AG04450 (cell line): ENCODE measurements at regions of chr3 and their contacts with region 1.

Region 1: DNA sequence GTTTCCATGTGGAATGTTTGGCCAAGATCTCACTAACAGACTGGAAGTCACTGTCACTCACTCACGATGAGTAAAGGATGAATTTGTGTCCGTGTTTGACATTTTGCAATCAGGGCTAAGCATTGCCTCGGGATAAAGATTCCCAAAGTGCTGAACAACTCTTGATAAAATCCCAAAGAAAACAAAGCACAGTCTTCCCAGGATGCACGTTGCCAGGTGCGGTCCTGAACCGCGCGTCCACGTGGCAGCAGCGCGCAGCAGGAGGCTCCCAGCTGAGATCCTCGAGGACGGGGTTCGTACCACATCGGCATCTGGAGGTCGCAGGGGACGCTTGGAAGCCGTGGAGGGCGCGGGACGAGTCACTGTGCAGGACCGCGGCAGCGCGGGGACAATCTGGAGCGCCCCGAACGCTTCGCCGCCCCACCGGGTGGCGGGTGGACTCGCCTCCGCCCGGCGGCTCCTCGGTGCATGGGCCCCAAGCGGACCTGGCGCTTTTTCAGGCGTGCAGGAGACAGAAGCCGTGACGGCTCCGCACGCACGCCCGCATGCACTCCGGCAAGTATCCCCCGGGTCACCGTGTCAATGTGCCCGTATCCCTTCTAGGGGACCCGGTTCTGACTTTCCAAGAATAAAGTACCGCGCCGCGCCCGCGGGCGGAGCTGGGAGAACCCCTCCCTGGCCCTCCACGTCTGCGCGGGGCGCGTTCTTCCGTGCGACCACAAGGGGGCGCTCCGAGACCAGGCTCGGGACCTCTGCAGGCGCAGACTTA is 17.7 kb downstream of the CPN2 start:
- DNase-seq: no peak
- H3K4me3 ChIP-seq: peak overlapping the region; percentile 67
- H3K27ac ChIP-seq: no peak overlapping the region
- H3K27me3 ChIP-seq: no peaks in the 10 kb centered on the region
- CTCF ChIP-seq: peak; percentile 92

Region 2: DNA sequence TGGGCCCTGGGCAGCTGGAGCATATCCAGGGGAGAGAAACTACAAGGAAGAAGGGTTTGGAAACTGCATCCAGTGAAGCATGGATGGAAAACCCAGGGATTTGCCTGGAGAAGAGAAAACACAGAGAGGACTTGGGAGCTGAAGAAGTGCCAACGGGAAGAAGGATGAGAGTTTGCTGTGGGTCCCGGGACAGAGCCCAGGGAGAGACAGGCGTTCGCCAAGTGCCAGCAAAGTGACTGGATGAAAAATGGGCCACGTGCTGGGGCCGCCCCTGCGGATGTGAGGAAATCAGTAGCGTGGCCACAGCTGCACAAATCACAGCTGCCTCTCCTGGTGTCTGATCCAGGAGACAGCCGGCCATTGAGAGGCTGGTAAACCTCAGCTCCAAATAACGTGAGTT is 127.1 kb before region 1 on chr3:
- CTCF ChIA-PET with region 1: no interaction called
- POLR2A ChIA-PET with region 1: no interaction called
- DNase-seq: no peak
- H3K4me3 ChIP-seq: no peak overlapping the region
- H3K27ac ChIP-seq: no peak overlapping the region
- H3K27me3 ChIP-seq: peaks cover 40% of the 10 kb centered on the region
- CTCF ChIP-seq: no peak

Region 3: GRCh38 chr3:194395778-194396547 is 62.6 kb after region 1 on chr3:
- CTCF ChIA-PET with region 1: interaction called, 11 read pairs
- POLR2A ChIA-PET with region 1: no interaction called
- DNase-seq: no peak
- H3K4me3 ChIP-seq: no peak overlapping the region
- H3K27ac ChIP-seq: peak overlapping the region; percentile 21
- H3K27me3 ChIP-seq: peaks cover 23% of the 10 kb centered on the region
- CTCF ChIP-seq: no peak

Region 4: DNA sequence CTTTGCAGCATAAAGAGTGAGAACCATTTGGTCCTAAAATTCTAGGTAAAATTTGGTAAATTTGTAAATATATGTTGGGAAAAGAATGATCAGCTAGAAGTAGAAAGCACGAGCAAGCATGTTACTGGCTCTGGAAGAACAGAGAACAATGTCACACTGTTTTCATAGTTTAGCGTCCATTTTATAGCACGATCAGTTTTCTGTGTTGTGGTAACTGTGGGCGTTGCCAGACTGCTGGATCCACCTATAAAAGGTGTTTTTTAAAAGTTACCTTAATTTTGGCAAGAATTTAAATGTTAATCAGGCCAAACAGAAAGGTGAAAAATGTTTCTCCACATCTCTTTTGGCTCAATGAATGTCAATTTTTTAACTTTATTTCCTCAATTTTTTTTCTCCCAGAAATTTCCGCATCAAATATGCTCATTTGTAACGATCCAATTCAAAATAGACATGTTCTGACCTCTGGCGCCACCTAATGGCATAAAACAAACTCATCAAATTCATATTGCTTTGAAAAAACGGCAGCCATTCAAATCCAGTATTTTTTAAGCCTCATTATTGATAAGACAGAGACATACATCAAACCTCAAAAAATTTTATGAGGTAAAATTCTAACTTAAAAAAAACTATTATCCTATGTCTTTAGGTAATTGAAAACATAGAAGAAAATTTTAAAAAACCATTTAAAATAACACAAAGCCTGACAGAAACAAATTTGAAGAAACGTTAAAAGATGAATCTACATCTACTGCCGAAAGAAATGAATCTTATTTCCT is 71.2 kb after region 1 on chr3:
- CTCF ChIA-PET with region 1: interaction called, 98 read pairs
- POLR2A ChIA-PET with region 1: no interaction called
- DNase-seq: no peak
- H3K4me3 ChIP-seq: no peak overlapping the region
- H3K27ac ChIP-seq: no peak overlapping the region
- H3K27me3 ChIP-seq: no peaks in the 10 kb centered on the region
- CTCF ChIP-seq: peak; percentile 66